ENCODE measurements at regions of chr16 and their contacts with region 1.

Region 1: GRCh38 chr16:22374311-22375116 is at the start of gene CDR2:
- DNase-seq: peak; percentile 96 to 99 (median 98)
- ATAC-seq: peak; percentile 92
- H3K4me3 ChIP-seq: peak within 1 kb of the TSS; percentile 60 to 71
- H3K4me3 Mint-ChIP-seq: peak within 1 kb of the TSS; percentile 97
- H3K27ac ChIP-seq: peak within 1 kb of the TSS; percentile 51 to 77
- H3K27ac Mint-ChIP-seq: peak within 1 kb of the TSS; percentile 95
- H3K4me1 ChIP-seq: peaks cover 34% of the 10 kb centered on the region
- H3K4me1 Mint-ChIP-seq: peaks cover 49% of the 10 kb centered on the region
- H3K27me3 ChIP-seq: no peaks in the 10 kb centered on the region
- H3K27me3 Mint-ChIP-seq: no peaks in the 10 kb centered on the region
- CTCF ChIP-seq: no peak
- total RNA-seq, gene CDR2: 119 to 120 TPM

Region 2: GRCh38 chr16:22291020-22291419 is 83.5 kb before region 1 on chr16:
- CTCF ChIA-PET with region 1: no interaction called
- POLR2A ChIA-PET with region 1: no interaction called
- intact Hi-C with region 1: no loop called
- DNase-seq: no peak
- ATAC-seq: no peak
- H3K4me3 ChIP-seq: no peak overlapping the region
- H3K4me3 Mint-ChIP-seq: no peak overlapping the region
- H3K27ac ChIP-seq: no peak overlapping the region
- H3K27ac Mint-ChIP-seq: no peak overlapping the region
- H3K4me1 ChIP-seq: no peaks in the 10 kb centered on the region
- H3K4me1 Mint-ChIP-seq: peaks cover under 1% of the 10 kb centered on the region
- H3K27me3 ChIP-seq: no peaks in the 10 kb centered on the region
- H3K27me3 Mint-ChIP-seq: no peaks in the 10 kb centered on the region
- CTCF ChIP-seq: no peak

Region 3: DNA sequence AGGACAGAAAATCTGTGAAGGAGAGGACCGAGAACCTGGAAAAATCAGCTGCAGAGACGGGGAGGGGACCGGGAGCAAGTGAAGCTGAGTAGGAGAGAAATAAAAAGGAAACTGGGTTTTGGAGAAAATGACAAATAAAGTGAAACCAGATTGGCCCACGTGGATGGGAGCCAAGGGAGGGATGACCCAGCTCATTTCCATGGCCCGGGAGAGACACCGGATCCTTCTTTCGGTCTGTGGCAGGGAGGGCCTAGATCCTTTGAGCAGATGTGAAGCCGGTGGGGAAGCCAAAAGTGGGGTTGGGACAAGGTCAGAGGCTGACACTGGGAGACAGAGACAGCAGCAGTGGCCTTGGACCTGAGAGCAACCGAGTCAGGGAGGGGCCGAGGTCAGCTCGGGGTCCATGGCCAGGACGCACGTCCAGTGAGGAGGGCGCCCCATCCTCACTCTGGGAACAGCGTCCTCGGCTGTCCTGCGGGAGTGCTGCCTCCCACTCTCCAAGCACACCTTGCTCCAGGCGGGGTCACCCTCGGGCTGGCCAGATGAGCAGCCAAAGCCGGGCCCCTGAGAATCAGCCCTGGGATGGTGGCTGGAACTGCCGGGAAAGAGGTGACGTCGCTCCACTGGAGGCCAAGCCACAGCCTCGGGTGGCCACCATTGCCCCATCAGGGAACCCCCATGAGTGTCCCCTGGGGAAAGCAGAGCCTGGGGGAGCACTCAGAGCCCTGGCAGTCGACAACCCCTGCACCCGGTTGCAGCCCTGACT is 50.7 kb after region 1 on chr16:
- CTCF ChIA-PET with region 1: no interaction called
- POLR2A ChIA-PET with region 1: interaction called, 4 read pairs
- intact Hi-C with region 1: loop called in 1 of 2 experiments (anchors 10 kb)
- DNase-seq: no peak
- ATAC-seq: no peak
- H3K4me3 ChIP-seq: no peak overlapping the region
- H3K4me3 Mint-ChIP-seq: no peak overlapping the region
- H3K27ac ChIP-seq: no peak overlapping the region
- H3K27ac Mint-ChIP-seq: no peak overlapping the region
- H3K4me1 ChIP-seq: no peaks in the 10 kb centered on the region
- H3K4me1 Mint-ChIP-seq: no peaks in the 10 kb centered on the region
- H3K27me3 ChIP-seq: no peaks in the 10 kb centered on the region
- H3K27me3 Mint-ChIP-seq: no peaks in the 10 kb centered on the region
- CTCF ChIP-seq: no peak

Region 4: DNA sequence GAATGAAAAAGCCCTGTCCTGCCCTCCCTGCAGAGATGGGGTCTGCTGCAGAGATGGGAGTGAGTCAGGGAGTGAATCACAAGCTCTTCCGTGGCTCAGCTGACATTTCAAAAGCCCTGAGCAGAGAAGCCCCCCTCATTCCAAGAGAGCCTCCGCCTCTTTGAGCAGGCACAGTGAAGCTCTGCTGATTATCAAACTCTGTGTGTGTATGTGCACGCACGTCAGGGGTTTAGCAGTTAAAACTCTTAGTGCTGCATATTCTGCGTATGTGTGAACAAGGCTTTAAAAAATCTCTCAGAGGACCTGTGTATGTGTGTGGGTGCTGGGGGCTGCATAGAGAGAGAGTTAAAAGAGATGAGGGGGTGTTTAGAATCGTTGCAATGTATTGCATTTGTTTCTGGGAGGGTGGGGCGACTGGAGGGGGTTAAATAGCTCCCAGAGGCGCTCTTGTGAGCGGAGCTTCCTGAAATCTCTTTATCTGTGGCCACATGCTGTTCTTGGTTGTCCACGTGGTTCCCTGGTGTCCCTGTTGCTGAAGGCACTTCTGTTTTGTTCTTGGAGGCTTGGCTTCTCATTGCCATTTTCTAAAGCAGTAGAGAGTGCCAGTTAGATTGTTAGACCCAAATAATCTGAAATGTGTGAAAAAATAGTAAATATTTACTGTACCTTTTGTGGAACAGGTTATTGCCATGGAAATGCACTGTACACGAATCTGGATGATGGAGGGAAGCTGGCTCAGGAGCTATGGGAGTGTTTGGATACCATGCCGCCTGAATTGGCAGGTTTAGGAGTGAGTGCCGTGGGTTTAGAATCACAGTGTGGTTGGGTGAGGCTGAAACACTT is 1577.8 kb after region 1 on chr16:
- CTCF ChIA-PET with region 1: no interaction called
- POLR2A ChIA-PET with region 1: no interaction called
- intact Hi-C with region 1: no loop called
- DNase-seq: peak in 6 of 9 experiments; percentile 14 to 62 (median 52)
- ATAC-seq: peak; percentile 46
- H3K4me3 ChIP-seq: no peak overlapping the region
- H3K4me3 Mint-ChIP-seq: peak overlapping the region; percentile 76
- H3K27ac ChIP-seq: peak overlapping the region; percentile 8 to 45
- H3K27ac Mint-ChIP-seq: peak overlapping the region; percentile 96
- H3K4me1 ChIP-seq: peaks cover 73% of the 10 kb centered on the region
- H3K4me1 Mint-ChIP-seq: peaks cover 91% of the 10 kb centered on the region
- H3K27me3 ChIP-seq: no peaks in the 10 kb centered on the region
- H3K27me3 Mint-ChIP-seq: no peaks in the 10 kb centered on the region
- CTCF ChIP-seq: no peak